Activated CD4-positive, alpha-beta memory T cell treated with anti-CD3 and anti-CD28 coated beads for 36 hours (primary cell): ENCODE measurements at regions of chr12 and their contacts with region 1.

Region 1: GRCh38 chr12:24728366-24728765 is 220.5 kb downstream of the BCAT1 start:
- DNase-seq: no peak
- H3K4me3 Mint-ChIP-seq: no peak overlapping the region
- H3K27ac Mint-ChIP-seq: peak overlapping the region; percentile 38
- H3K4me1 Mint-ChIP-seq: peaks cover 54% of the 10 kb centered on the region
- H3K27me3 Mint-ChIP-seq: no peaks in the 10 kb centered on the region

Region 2: DNA sequence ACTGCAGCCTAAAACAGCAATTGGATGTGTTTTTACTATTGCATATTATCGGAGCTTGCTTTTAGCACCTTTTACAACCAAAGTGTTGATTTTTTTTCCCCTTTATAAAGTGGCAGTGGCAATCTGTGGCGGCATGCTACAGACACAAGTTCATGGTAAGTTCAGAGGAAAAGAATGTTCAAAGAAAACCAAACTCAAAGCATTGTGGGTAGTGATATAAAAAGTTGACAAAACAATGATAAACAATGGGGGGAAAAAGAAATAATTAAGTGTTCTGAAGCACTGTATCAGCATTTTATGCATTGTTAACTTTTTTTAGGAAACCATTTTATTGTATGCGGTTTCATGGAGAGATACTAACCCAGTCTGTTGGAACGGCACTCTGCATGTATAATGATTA is 286.9 kb before region 1 on chr12:
- CTCF ChIA-PET with region 1: no interaction called
- POLR2A ChIA-PET with region 1: no interaction called
- intact Hi-C with region 1: no loop called
- DNase-seq: no peak
- H3K4me3 Mint-ChIP-seq: no peak overlapping the region
- H3K27ac Mint-ChIP-seq: no peak overlapping the region
- H3K4me1 Mint-ChIP-seq: no peaks in the 10 kb centered on the region
- H3K27me3 Mint-ChIP-seq: peaks cover 2% of the 10 kb centered on the region

Region 3: DNA sequence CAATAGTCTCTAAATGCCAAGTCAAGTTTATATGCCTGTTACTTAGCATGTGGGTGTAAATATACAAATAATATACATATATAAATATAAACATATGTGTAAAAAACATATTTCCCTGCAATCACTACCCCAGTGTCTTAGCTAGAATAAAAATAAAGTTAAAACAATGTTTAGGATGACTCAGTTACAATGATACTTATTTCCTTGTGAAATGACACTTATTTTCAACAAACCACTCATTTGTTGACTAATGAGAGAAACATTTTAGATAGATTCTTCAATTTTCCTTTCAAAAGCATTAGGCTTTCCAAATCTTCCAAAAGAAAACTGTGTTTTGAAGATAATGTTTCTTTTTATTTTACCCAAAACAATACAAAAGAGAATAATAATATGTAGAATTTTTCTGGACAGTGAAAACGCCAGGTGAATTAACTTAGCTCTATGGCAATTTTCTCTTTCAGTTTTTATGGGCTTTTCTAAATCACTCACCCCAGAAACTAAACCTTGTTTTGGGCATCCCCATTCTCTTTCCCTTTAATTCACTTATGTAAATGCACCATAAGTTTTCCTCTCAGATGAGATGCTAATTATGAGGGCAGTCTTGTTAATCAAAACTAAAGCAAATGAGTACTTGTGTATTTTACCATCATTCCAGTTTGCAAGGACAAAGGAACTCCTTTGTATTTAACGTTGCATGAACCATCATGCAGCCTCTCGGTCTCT is 245.3 kb before region 1 on chr12:
- CTCF ChIA-PET with region 1: no interaction called
- POLR2A ChIA-PET with region 1: no interaction called
- intact Hi-C with region 1: loop called (anchors 2 kb)
- DNase-seq: no peak
- H3K4me3 Mint-ChIP-seq: no peak overlapping the region
- H3K27ac Mint-ChIP-seq: no peak overlapping the region
- H3K4me1 Mint-ChIP-seq: no peaks in the 10 kb centered on the region
- H3K27me3 Mint-ChIP-seq: no peaks in the 10 kb centered on the region

Region 4: GRCh38 chr12:24600996-24601395 is 127.4 kb before region 1 on chr12:
- CTCF ChIA-PET with region 1: no interaction called
- POLR2A ChIA-PET with region 1: no interaction called
- intact Hi-C with region 1: loop called (anchors 1 kb)
- DNase-seq: no peak
- H3K4me3 Mint-ChIP-seq: no peak overlapping the region
- H3K27ac Mint-ChIP-seq: peak overlapping the region; percentile 42
- H3K4me1 Mint-ChIP-seq: peaks cover 5% of the 10 kb centered on the region
- H3K27me3 Mint-ChIP-seq: peaks cover 5% of the 10 kb centered on the region

Region 5: GRCh38 chr12:24742378-24742777 is 14.0 kb after region 1 on chr12:
- CTCF ChIA-PET with region 1: no interaction called
- POLR2A ChIA-PET with region 1: no interaction called
- intact Hi-C with region 1: loop called (anchors 1 kb)
- DNase-seq: peak; percentile 70
- H3K4me3 Mint-ChIP-seq: no peak overlapping the region
- H3K27ac Mint-ChIP-seq: peak overlapping the region; percentile 76
- H3K4me1 Mint-ChIP-seq: peaks cover 23% of the 10 kb centered on the region
- H3K27me3 Mint-ChIP-seq: peaks cover 3% of the 10 kb centered on the region

Region 6: GRCh38 chr12:24767016-24767415 is 38.6 kb after region 1 on chr12:
- CTCF ChIA-PET with region 1: no interaction called
- POLR2A ChIA-PET with region 1: no interaction called
- intact Hi-C with region 1: loop called (anchors 1 kb)
- DNase-seq: peak; percentile 36
- H3K4me3 Mint-ChIP-seq: no peak overlapping the region
- H3K27ac Mint-ChIP-seq: peak overlapping the region; percentile 69
- H3K4me1 Mint-ChIP-seq: peaks cover 13% of the 10 kb centered on the region
- H3K27me3 Mint-ChIP-seq: peaks cover 6% of the 10 kb centered on the region

Region 7: DNA sequence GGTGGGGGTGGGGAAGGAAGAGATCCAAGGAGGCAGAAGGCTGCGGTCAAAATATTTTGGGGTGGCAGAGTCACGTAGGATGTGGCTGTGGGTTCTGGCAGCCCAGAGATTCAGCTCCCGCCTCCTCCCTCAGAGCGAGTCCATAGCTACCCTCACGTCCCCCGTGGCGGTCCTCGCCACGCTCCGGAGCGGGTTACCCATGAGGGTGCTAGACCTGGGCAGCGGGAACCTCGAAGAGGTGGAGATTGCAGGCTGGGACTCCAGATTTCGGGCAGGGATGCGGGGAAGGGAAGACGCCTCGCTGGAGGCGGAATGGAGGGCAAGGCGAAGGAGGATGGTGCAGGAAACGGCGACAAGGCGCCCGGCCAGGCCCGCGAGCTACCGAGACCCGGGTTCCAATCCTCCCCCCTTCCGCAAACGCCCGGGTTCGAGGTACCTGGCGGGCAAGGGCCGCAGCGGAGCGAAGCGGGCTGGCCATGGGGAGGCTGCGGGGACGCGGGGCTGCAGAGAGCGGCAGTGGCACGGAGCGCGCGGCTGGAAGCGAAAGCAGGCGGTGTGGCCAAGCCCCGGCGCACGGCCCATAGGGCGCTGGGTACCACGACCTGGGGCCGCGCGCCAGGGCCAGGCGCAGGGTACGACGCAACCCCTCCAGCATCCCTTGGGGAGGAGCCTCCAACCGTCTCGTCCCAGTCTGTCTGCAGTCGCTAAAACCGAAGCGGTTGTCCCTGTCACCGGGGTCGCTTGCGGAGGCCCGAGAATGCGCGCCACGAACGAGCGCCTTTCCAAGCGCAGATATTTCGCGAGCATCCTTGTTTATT is 174.4 kb after region 1 on chr12:
- CTCF ChIA-PET with region 1: no interaction called
- POLR2A ChIA-PET with region 1: no interaction called
- intact Hi-C with region 1: loop called (anchors 5 kb)
- DNase-seq: peak; percentile 39
- H3K4me3 Mint-ChIP-seq: peak overlapping the region; percentile 81
- H3K27ac Mint-ChIP-seq: peak overlapping the region; percentile 60
- H3K4me1 Mint-ChIP-seq: peaks cover 32% of the 10 kb centered on the region
- H3K27me3 Mint-ChIP-seq: peaks cover 19% of the 10 kb centered on the region

Region 8: GRCh38 chr12:25276199-25276937 is 548.0 kb after region 1 on chr12:
- CTCF ChIA-PET with region 1: no interaction called
- POLR2A ChIA-PET with region 1: no interaction called
- intact Hi-C with region 1: no loop called
- DNase-seq: peak; percentile 89
- H3K4me3 Mint-ChIP-seq: no peak overlapping the region
- H3K27ac Mint-ChIP-seq: peak overlapping the region; percentile 42
- H3K4me1 Mint-ChIP-seq: peaks cover 24% of the 10 kb centered on the region
- H3K27me3 Mint-ChIP-seq: no peaks in the 10 kb centered on the region